A673 (cell line): ENCODE measurements at regions of chr13 and their contacts with region 1.

Region 1: DNA sequence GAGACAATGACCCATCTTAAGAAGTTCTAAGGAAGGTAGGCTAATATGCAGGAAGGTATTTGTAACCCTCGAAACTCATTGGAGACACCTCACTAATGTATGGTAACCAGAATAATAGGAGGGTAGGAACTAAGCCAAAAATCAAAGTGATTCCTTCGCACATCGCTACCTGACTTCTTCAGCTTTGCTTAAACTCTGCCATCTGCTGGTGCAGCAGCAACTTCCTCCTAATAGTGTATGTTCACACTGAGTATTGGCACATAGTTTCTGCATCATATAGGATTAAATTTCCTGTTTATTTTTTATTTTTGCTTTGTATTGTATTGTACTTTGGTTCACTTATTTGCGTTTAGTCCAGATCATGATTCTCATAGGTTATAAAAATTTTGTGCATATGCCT is 676.2 kb downstream of the GPC5 start:
- DNase-seq: peak; percentile 48
- H3K4me3 ChIP-seq: no peak overlapping the region
- H3K27ac ChIP-seq: no peak overlapping the region
- H3K4me1 ChIP-seq: no peaks in the 10 kb centered on the region
- H3K27me3 ChIP-seq: no peaks in the 10 kb centered on the region
- CTCF ChIP-seq: peak; percentile 64

Region 2: GRCh38 chr13:91817250-91817649 is 257.4 kb before region 1 on chr13:
- CTCF ChIA-PET with region 1: no interaction called
- POLR2A ChIA-PET with region 1: no interaction called
- intact Hi-C with region 1: loop called (anchors 2 kb)
- DNase-seq: peak; percentile 65
- H3K4me3 ChIP-seq: no peak overlapping the region
- H3K27ac ChIP-seq: no peak overlapping the region
- H3K4me1 ChIP-seq: peaks cover 19% of the 10 kb centered on the region
- H3K27me3 ChIP-seq: no peaks in the 10 kb centered on the region
- CTCF ChIP-seq: peak; percentile 73

Region 3: DNA sequence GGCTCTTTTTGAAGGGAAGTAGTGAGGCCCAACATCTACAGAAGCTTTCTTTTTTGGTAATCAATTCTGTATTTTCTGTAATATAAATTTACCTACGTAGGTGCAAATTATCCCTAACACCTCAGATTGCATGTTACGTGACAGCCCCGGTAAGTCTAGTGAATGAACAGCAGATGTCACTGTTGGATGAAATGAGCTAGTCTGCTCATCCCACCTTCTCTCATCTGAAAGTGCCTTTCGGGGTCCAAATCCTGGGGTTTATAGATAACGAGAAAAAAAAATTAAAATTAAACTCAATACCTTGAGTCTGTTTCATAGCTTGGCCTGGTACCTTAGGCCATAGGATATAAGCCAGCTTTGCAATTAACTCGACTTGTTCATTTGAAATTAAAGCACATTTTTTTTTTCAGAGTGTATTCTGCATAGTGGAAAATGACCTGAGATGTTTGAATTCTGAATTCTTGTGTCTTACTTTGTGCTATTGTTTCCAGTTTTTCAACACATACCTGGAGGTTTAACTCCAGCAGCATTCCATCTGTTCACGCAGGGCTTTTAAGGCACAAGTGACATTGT is 128.1 kb before region 1 on chr13:
- CTCF ChIA-PET with region 1: no interaction called
- POLR2A ChIA-PET with region 1: no interaction called
- intact Hi-C with region 1: loop called (anchors 2 kb)
- DNase-seq: peak; percentile 40
- H3K4me3 ChIP-seq: no peak overlapping the region
- H3K27ac ChIP-seq: no peak overlapping the region
- H3K4me1 ChIP-seq: no peaks in the 10 kb centered on the region
- H3K27me3 ChIP-seq: peaks cover 4% of the 10 kb centered on the region
- CTCF ChIP-seq: peak; percentile 63